Esophagus squamous epithelium (tissue), 5 donors: ENCODE measurements at regions of chr7 and their contacts with region 1.

Region 1: DNA sequence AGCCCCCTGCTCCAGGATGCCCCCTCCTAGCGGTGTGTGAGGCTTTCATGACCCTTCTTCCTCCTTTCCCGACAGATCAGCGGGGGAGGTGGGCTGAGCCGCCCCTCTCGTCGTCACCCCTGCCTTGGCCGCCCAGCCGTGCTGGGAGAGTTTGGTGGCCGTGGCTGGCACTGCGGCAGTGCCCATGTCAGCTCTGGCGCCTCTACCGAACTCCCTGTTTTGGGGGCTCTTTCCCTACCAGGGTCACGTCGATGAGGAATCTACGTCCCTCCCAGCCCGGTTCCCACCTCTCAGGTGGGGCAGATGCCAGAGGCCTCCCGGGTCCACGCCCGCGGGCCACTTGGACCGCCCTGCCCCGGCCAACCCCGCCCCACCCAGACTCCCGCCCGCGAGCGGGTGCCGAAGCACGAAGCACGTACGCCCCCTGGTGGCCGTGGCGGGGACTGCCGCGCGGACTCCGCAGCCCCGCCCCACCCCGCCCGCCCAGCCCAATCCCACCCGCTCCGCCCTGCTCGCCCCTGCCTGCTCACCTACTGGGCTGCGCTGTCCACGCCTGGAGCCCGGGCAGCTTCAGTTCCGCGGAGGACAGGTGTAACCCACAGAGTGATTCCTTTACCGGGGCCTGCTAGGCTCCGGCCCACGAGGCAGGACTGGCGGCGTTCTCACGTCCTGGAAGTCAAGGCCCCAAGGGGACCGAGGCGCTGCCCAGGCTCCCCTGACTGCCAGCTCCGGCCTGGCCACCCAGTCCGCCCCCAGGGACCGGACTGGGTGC is 127.1 kb downstream of the UBE2H start:
- DNase-seq: peak; percentile 37
- H3K4me3 ChIP-seq: peak overlapping the region; percentile 58 to 77 (median 60)
- H3K27ac ChIP-seq: peak overlapping the region; percentile 76 to 85 (median 82)
- H3K4me1 ChIP-seq: peaks cover 11 to 40% (median 14%) of the 10 kb centered on the region in 3 donors
- H3K27me3 ChIP-seq: no peaks in the 10 kb centered on the region
- CTCF ChIP-seq: peak; percentile 56 to 100 (median 65)
- POLR2A ChIP-seq: no peak

Region 2: DNA sequence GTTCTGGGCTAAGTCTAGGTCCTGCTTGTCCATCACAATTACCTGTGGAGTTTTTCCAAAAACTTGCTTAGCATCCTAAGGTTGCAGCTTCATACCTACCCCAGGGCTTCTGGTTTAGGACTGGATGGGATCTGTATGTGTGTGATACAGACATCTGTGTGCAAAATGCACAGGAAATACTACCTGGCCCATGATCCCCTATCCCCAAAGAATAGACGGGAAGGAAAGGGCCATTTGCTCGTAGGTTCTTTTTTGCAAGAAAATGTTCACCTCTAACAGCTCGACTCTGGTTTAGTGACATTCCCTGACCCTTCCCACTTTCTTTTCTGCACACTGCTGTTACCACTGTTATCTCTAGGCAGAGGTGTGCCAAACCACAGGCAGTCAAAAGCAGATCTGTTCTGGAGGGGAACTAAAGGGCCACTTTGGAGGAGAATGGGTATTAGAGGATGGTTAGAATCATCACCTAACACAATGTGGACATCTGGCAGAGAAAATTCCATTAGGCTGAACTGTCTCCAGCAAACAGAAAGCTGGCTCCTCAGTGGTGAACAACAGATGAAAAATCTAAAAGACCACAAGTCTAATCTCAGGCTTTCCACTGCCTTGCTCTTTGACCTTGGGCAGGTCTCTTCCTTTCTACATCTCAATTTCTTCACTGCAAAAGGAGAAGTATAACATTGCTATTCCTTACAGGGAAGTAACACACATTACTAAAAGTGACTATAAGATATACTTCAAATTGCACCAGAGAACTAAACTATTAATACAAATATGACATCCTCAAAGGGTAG is 19.7 kb after region 1 on chr7:
- intact Hi-C with region 1: no loop called
- DNase-seq: no peak
- H3K4me3 ChIP-seq: no peak overlapping the region
- H3K27ac ChIP-seq: no peak overlapping the region
- H3K4me1 ChIP-seq: peaks cover 27 to 77% (median 28%) of the 10 kb centered on the region in 3 donors
- H3K27me3 ChIP-seq: no peaks in the 10 kb centered on the region
- CTCF ChIP-seq: no peak
- POLR2A ChIP-seq: no peak

Region 3: DNA sequence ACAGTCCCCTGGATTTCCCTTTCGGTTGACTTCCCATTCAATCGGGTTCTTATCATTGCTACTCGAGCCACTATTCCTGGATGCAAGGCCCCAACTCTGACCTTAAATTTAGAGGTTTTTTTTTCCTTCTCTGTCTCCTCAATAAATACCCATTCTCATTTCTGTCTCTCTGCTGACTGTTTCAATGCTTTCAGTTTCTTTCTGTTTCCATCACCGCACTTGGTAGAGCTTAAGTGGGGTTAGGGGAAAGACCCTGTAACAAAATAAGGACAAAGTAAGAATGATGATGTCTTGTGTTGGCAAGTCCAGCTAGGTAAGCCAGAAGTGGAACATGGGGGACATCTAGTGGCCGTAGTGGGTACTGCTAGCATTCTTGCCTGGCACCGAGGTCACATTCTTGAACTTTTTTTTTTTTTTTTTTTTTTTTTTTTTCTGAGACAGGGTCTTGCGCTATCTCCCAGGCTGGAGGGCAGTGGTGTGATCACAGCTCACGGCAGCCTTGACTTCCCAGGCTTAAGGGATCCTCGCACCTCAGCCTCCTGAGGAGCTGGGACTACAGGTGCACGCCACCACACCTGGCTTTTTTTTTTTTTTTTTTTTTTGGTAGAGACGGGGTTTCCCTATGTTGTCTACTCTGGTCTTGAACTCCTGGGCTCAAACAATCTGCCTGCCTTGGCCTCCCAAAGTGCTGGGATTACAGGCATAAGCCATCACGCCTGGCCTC is 185.2 kb after region 1 on chr7:
- intact Hi-C with region 1: loop called (anchors 5 kb)
- DNase-seq: peak; percentile 21
- H3K4me3 ChIP-seq: no peak overlapping the region
- H3K27ac ChIP-seq: peak overlapping the region; percentile 75 to 83 (median 82)
- H3K4me1 ChIP-seq: peaks cover 13 to 30% (median 18%) of the 10 kb centered on the region in 3 donors
- H3K27me3 ChIP-seq: no peaks in the 10 kb centered on the region
- CTCF ChIP-seq: peak; percentile 69 to 95 (median 92)
- POLR2A ChIP-seq: no peak